ENCODE measurements at regions of chr12 and their contacts with region 1.

Region 1: DNA sequence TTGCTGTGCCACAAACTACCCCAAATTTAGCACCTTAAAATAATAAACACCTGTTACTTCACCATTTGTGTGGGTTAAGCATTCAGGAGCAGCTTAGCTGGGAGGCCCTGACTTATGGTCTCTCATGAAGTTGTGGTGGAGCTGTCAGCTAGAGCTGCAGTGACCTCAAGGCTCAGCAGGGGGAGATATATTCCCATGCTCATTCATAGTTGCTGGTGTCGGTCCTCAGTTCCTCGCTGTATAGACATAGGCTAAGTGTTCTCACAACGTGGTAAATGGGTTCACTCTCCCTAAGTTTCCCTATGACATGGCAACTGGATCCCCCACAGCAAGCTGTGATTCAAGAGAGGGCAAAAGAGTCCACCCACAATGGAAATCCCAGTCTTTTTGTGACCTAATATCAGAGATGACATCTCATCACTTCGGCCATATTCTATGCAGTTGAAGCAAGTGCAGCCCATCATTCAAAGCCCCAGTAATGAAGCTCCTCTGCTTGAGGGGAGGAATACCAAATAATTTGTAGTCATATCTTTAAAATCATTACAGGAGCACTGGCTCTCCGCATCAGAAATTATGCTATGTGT is 41.1 kb downstream of the PRB3 start:
- DNase-seq: no peak
- H3K4me3 Mint-ChIP-seq: no peak overlapping the region
- H3K27ac Mint-ChIP-seq: no peak overlapping the region
- H3K4me1 Mint-ChIP-seq: no peaks in the 10 kb centered on the region
- H3K27me3 Mint-ChIP-seq: peaks cover 5% of the 10 kb centered on the region

Region 2: DNA sequence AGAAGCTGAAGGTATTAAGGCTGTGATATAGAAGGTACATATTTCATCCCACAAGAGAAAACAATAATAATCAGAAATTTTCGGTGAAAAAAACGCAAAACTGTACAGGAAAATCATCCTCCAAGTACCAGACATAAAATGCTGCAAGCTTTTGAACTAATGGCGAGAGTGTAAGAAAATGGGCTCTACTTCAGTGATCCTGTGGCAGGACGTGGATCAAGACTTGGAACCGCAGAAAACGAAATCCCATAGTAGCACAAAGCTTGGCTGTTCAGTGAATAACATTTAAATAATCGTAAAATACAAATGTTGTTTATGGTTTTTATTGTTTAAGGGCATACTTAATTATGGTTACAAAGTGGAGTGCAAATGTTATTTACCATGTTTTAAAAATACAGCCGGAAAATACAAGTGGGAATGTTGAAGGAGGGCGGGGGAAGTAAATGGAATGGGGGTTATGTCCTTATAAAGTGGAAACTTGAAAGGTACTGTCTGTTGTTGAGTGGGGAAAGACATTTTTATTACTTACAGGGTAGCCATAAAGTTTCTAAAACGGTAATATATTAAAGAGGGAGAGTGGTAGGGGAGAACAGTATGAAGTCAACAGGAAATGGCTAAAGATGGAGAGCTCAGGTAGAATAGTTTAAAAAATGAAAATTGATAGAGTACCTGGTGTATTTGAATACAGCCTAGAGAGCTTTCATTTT is 56.3 kb before region 1 on chr12:
- intact Hi-C with region 1: no loop called
- DNase-seq: no peak
- H3K4me3 Mint-ChIP-seq: peak overlapping the region; percentile 99
- H3K27ac Mint-ChIP-seq: peak overlapping the region; percentile 99
- H3K4me1 Mint-ChIP-seq: peaks cover 51% of the 10 kb centered on the region
- H3K27me3 Mint-ChIP-seq: no peaks in the 10 kb centered on the region

Region 3: GRCh38 chr12:11486623-11487444 is 258.4 kb after region 1 on chr12:
- intact Hi-C with region 1: loop called (anchors 5 kb)
- DNase-seq: peak; percentile 62
- H3K4me3 Mint-ChIP-seq: no peak overlapping the region
- H3K27ac Mint-ChIP-seq: no peak overlapping the region
- H3K4me1 Mint-ChIP-seq: peaks cover 1% of the 10 kb centered on the region
- H3K27me3 Mint-ChIP-seq: peaks cover 8% of the 10 kb centered on the region